ENCODE measurements at regions of chr10 and their contacts with region 1.

Region 1: DNA sequence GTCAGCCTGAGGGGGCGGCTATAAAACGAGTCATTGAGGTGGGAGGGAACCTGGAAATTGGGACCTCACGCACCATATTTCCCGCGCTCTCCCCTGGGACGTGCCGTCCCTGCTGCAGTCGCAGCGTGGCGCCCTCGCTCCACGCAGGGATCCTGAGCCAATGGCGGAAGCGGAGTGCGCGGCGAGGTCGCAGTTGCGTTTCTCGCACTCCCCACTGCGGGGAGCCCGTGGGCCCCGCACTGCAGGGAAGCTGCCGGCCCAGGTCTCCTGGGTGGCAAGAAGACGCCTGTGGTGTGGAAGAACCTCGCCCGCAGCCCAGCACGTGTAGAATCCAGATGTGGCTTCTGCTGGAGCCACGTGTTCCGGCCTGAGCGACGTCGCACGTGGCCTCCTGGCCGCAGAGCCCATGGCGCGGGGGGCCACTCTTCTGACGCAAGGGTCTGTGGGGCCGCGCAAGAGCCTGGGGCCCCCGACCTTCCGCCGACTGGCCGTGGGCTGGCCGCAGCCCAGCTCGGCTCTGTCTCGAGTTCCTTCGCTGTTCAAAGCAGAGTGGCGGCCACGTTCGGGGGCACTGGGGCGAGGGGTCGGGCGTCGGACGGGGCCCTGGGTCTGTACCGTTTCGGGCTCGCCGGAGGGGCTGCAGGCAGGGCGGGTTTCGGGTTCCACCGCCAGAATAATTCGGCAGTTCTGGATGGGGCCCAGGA is 26.4 kb downstream of the HIF1AN start:
- DNase-seq: peak; percentile 73
- ATAC-seq: peak; percentile 64
- H3K4me3 Mint-ChIP-seq: no peak overlapping the region
- H3K27ac Mint-ChIP-seq: no peak overlapping the region
- H3K4me1 Mint-ChIP-seq: peaks cover 9% of the 10 kb centered on the region; the same call in 1 of the 2 replicates
- H3K27me3 Mint-ChIP-seq: peaks cover 51% of the 10 kb centered on the region
- CTCF ChIP-seq: peak; percentile 67; the same call in 1 of the 2 replicates

Region 2: DNA sequence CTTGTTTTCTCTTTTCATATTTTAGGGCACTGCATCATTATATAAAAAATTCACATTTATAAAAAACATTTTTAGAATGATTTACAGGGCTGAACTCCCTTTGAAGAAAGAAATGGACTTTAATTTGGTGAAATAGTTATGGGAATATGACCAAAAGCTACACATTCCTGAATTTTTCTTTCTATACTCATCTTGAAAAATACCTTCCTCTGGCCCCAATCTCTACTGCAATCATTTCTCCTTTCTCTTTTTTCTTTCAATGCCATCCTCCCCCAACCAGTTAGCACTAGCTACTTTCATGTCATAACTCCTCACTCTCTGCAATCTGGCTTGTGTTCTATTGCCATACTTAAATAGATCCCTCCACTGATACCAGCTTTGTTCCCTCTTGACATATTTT is 93.2 kb before region 1 on chr10:
- CTCF ChIA-PET with region 1: no interaction called
- POLR2A ChIA-PET with region 1: no interaction called
- DNase-seq: no peak
- ATAC-seq: no peak
- H3K4me3 Mint-ChIP-seq: no peak overlapping the region
- H3K27ac Mint-ChIP-seq: no peak overlapping the region
- H3K4me1 Mint-ChIP-seq: no peaks in the 10 kb centered on the region
- H3K27me3 Mint-ChIP-seq: peaks cover 90% of the 10 kb centered on the region
- CTCF ChIP-seq: no peak

Region 3: DNA sequence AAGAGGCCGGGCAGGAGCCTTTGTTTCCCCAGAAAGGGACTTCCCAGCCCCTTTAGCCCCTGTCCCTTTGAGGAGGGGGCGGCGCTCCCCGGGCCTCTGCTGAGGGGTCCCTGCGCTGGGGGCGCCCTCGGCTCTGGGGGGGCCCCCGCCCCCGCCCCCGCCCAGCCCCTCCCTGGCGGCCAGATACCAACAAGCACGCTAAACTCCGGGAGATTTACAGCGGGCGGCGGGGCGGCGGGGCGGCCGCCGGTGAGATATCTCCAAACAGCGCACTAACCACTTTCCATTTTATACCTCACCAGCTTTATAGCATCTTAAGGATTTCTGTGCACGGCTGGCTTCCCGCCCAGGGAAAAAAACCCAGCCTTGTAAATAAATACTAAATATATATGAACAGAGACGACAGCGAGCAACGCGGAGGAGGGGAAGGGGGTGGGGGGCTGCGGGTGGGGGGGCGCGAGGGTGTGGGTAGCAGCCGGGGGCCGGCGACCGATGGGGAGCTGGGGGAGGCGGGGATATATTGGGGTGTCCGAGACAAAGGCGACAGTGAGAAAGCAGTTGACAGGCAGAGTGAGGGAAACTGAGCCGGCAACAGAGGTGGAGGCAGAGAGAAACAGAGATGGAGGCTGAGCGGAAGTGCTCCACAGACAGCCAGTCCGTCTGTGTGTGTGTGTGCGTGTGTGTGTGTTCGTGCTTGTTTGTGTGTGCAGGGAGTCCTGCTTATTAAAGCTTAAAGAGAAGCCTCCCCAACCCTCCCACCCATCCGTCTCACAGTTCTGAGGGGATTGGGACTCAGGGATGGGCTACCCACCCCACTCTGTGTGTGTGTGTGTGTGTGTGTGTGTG is 59.4 kb after region 1 on chr10:
- CTCF ChIA-PET with region 1: interaction called, 11 read pairs
- POLR2A ChIA-PET with region 1: no interaction called
- DNase-seq: no peak
- ATAC-seq: no peak
- H3K4me3 Mint-ChIP-seq: no peak overlapping the region
- H3K27ac Mint-ChIP-seq: no peak overlapping the region
- H3K4me1 Mint-ChIP-seq: peaks cover 23% of the 10 kb centered on the region
- H3K27me3 Mint-ChIP-seq: peaks cover 11% of the 10 kb centered on the region
- CTCF ChIP-seq: no peak

Region 4: GRCh38 chr10:100715445-100716385 is 153.6 kb after region 1 on chr10:
- CTCF ChIA-PET with region 1: interaction called, 17 read pairs
- POLR2A ChIA-PET with region 1: no interaction called
- DNase-seq: peak; percentile 46
- ATAC-seq: peak; percentile 70
- H3K4me3 Mint-ChIP-seq: peak overlapping the region; percentile 79
- H3K27ac Mint-ChIP-seq: no peak overlapping the region
- H3K4me1 Mint-ChIP-seq: peaks cover 16% of the 10 kb centered on the region
- H3K27me3 Mint-ChIP-seq: peaks cover 100% of the 10 kb centered on the region
- CTCF ChIP-seq: no peak

Region 5: GRCh38 chr10:100737355-100738054 is 175.3 kb after region 1 on chr10:
- CTCF ChIA-PET with region 1: interaction called, 113 read pairs
- POLR2A ChIA-PET with region 1: no interaction called
- DNase-seq: peak; percentile 79
- ATAC-seq: peak; percentile 22
- H3K4me3 Mint-ChIP-seq: peak overlapping the region; percentile 43
- H3K27ac Mint-ChIP-seq: no peak overlapping the region
- H3K4me1 Mint-ChIP-seq: peaks cover 65% of the 10 kb centered on the region
- H3K27me3 Mint-ChIP-seq: peaks cover 100% of the 10 kb centered on the region
- CTCF ChIP-seq: no peak

Region 6: DNA sequence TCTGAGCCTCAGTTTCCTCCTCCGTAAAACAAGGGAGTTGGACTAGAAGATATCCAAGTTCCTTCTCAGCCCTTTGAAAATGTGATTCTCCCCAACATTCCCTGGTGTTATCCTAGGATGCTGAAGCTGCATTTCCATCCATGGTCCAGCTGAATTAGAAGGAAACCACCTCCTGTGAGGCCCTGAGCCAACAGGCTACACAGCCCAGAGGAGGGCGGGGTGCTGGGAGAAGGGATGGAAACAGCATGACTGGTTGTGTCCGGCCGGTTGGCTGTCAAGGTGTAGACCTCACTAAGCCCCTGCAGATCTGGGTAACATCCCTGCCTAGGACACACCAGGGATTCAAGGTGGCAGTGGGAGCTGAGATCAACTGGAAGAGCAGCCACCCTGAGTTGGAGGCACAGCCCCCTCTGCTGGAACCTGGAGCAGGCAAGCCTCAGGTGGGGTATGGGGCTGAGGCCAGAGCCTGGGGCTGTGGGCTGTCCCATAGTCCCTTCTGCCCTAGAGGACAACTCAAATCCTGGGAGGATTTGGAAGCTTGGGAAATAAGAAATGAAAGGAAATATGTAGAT is 255.2 kb after region 1 on chr10:
- CTCF ChIA-PET with region 1: interaction called, 10 read pairs
- POLR2A ChIA-PET with region 1: no interaction called
- DNase-seq: peak; percentile 72
- ATAC-seq: peak; percentile 97
- H3K4me3 Mint-ChIP-seq: no peak overlapping the region
- H3K27ac Mint-ChIP-seq: no peak overlapping the region
- H3K4me1 Mint-ChIP-seq: peaks cover 24% of the 10 kb centered on the region
- H3K27me3 Mint-ChIP-seq: peaks cover 32% of the 10 kb centered on the region
- CTCF ChIP-seq: 0 out of 2 replicates have a peak, but pooled peaks have one; percentile 18

Region 7: DNA sequence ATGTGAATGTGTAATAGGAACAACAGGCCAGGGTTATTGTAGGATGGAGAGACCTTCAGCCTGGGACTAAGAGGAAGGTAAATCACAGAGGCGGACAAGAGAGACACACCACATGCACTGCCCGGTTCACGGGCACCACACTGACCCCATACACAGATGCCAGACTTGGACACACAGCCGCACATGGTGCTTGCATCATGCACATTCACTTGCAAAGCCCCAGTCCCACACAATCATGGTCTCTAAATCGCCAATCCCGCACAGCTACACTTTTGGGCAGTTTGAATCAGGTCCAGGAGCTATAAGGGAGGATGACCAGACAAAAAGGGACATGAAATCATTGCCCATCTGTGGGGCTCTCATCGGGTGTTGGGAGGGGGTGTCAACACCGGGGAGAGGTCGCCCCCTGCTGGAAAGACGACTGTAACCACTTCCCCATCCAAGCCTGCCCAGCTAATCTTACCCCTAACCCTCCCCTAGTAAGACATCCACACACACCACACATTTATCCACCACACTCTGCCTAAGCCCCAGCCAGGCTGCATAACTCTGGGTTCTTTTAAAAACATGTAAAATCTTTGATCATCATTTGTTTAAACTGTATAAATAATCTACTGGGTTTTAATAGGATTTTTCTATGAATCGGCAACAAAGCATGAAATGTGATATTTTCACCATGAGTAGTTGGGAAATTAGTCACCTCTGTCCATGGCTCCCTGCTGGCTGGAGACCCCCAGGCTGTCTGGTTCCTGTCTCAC is 310.1 kb after region 1 on chr10:
- CTCF ChIA-PET with region 1: interaction called, 20 read pairs
- POLR2A ChIA-PET with region 1: interaction called, 3 read pairs
- DNase-seq: peak; percentile 86
- ATAC-seq: peak; percentile 88
- H3K4me3 Mint-ChIP-seq: no peak overlapping the region
- H3K27ac Mint-ChIP-seq: no peak overlapping the region
- H3K4me1 Mint-ChIP-seq: peaks cover 20% of the 10 kb centered on the region
- H3K27me3 Mint-ChIP-seq: peaks cover 37% of the 10 kb centered on the region
- CTCF ChIP-seq: peak; percentile 76